Kidney (tissue), 22 donors: ENCODE measurements at regions of chr9 and their contacts with region 1.

Region 1: GRCh38 chr9:136790927-136791641 is at the start of gene TMEM141:
- DNase-seq: peak; percentile 100
- H3K4me3 ChIP-seq: peak within 1 kb of the TSS; percentile 81 to 90 (median 87)
- H3K27ac ChIP-seq: peak within 1 kb of the TSS; percentile 95 to 97
- H3K4me1 ChIP-seq: peaks cover 3 to 18% (median 6%) of the 10 kb centered on the region in 3 donors
- H3K27me3 ChIP-seq: no peaks in the 10 kb centered on the region
- CTCF ChIP-seq: no peak
- total RNA-seq, gene TMEM141: 96.5 TPM

Region 2: GRCh38 chr9:136451221-136451877 is 339.7 kb before region 1 on chr9:
- intact Hi-C with region 1: no loop called
- DNase-seq: no peak
- H3K4me3 ChIP-seq: no peak overlapping the region
- H3K27ac ChIP-seq: no peak overlapping the region
- H3K4me1 ChIP-seq: no peaks in the 10 kb centered on the region
- H3K27me3 ChIP-seq: no peaks in the 10 kb centered on the region
- CTCF ChIP-seq: no peak

Region 3: DNA sequence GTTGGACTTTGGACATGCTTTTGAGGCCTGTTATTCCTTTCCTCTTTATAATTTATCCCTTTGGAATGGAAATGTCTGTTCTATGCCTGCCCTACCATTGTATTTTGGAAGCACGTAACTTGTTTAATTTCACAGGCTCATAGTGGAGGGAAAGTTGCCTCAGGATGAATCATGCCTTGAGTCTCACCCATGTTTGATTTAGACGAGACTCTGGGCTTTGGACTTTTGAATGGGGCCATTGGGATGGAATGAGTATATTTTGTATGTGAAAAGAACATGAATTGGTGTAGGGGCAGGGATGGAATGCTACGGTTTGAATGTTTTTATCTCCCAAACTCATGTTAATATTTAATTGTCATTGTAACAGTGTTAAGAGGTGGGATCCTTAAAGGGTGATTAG is 143.2 kb after region 1 on chr9:
- intact Hi-C with region 1: no loop called
- DNase-seq: no peak
- H3K4me3 ChIP-seq: no peak overlapping the region
- H3K27ac ChIP-seq: no peak overlapping the region
- H3K4me1 ChIP-seq: no peaks in the 10 kb centered on the region
- H3K27me3 ChIP-seq: no peaks in the 10 kb centered on the region
- CTCF ChIP-seq: no peak

Region 4: GRCh38 chr9:136944519-136945279 is 153.6 kb after region 1 on chr9 and contains the starts of genes C8G and FBXW5:
- intact Hi-C with region 1: loop called (anchors 10 kb)
- DNase-seq: peak; percentile 96 to 99 (median 97)
- H3K4me3 ChIP-seq: peak within 1 kb of the TSS; percentile 30 to 84 (median 63)
- H3K27ac ChIP-seq: peak within 1 kb of the TSS; percentile 68 to 83
- H3K4me1 ChIP-seq: peaks cover 0 to 18% (median 9%) of the 10 kb centered on the region in 3 donors
- H3K27me3 ChIP-seq: no peaks in the 10 kb centered on the region
- CTCF ChIP-seq: peak; percentile 96
- total RNA-seq, gene C8G: 1.9 TPM
- total RNA-seq, gene FBXW5: 97.2 TPM

Region 5: DNA sequence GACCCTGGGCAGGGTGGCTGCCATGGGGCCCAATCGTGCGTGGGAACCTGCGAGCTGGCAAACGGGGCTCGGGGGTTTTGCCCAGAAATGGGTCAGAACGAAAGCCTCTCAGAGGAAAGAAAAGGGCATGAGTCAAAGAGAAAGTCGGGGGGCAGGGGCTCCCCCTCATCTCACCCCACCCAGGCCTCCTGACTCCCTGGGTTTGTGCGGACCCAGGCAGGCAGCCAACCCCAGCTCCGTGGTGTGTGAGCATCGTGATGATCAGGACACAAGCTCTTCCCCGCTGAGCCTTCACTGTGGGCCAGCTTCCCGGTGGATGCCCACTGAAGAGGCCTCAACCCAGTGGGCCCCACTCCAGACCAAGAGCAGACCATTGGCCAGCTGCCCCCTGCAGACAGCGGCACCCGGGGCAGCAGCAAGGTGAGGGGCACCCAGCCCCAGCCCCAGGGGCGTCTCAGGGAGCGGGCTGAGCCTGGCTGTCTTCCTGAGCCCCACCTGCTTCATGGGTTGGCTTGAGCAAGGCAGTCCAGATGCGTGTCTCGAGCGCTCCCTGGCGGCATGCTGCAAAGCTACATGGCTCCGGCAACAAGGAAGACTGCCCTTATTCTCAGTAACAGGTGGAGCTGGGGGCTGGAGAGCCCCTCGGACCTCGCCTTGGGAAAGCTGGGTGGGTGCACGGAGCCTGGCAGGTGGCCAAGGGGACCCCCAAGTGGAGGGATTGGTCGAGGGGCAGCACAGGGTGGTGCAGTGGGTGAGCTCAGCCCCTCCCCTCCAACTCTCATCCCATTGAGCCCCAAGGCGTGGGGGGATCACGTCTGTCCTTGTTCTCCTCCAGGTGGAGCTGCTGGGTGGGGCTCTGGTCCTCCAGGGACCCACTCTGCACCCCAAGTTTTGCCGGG is 244.0 kb after region 1 on chr9:
- intact Hi-C with region 1: loop called (anchors 10 kb)
- DNase-seq: peak; percentile 88 to 94 (median 90)
- H3K4me3 ChIP-seq: no peak overlapping the region
- H3K27ac ChIP-seq: no peak overlapping the region
- H3K4me1 ChIP-seq: peaks cover 0 to 5% (median 0%) of the 10 kb centered on the region in 3 donors
- H3K27me3 ChIP-seq: no peaks in the 10 kb centered on the region
- CTCF ChIP-seq: peak; percentile 98